CD8-positive, alpha-beta T cell (primary cell): ENCODE measurements at regions of chr3 and their contacts with region 1.

Region 1: GRCh38 chr3:111539351-111540331 is 2.4 kb upstream of the CD96 start:
- DNase-seq: peak; percentile 19 to 84 (median 70)
- ATAC-seq: peak; percentile 34
- H3K4me3 ChIP-seq: peak overlapping the region; percentile 22 to 34
- H3K4me3 Mint-ChIP-seq: peak overlapping the region; percentile 77
- H3K27ac ChIP-seq: peak overlapping the region; percentile 22 to 57
- H3K27ac Mint-ChIP-seq: peak overlapping the region; percentile 93
- H3K4me1 ChIP-seq: peaks cover 41% of the 10 kb centered on the region
- H3K4me1 Mint-ChIP-seq: peaks cover 69% of the 10 kb centered on the region
- H3K27me3 ChIP-seq: no peaks in the 10 kb centered on the region
- H3K27me3 Mint-ChIP-seq: no peaks in the 10 kb centered on the region
- CTCF ChIP-seq: peak; percentile 96

Region 2: DNA sequence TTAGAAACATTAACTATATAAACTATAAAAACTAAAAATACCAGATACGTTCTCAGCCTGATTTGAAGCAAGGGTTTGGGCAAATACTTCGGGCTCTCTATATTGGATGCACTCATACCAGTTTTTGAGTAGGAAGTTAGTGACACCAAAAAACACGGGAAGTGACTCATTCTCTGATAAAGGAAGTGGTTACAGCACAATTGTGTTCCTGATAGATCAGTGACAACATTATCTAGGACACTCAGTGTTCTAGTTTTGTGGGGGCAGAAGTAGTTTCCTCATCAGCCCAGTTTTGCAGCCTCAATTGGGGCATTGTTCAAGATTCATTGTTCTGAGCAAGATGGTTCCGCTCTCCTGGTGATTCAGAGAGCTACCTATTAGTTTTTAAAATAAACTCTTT is 1732.7 kb before region 1 on chr3:
- CTCF ChIA-PET with region 1: interaction called, 3 read pairs
- POLR2A ChIA-PET with region 1: no interaction called
- intact Hi-C with region 1: loop called (anchors 2 to 5 kb)
- DNase-seq: peak in 8 of 9 experiments; percentile 4 to 88 (median 44)
- ATAC-seq: peak; percentile 85
- H3K4me3 ChIP-seq: peak overlapping the region in 1 of 2 experiments; percentile 0
- H3K4me3 Mint-ChIP-seq: peak overlapping the region; percentile 60
- H3K27ac ChIP-seq: peak overlapping the region; percentile 39 to 72
- H3K27ac Mint-ChIP-seq: peak overlapping the region; percentile 91
- H3K4me1 ChIP-seq: peaks cover 43% of the 10 kb centered on the region
- H3K4me1 Mint-ChIP-seq: peaks cover 48% of the 10 kb centered on the region
- H3K27me3 ChIP-seq: no peaks in the 10 kb centered on the region
- H3K27me3 Mint-ChIP-seq: no peaks in the 10 kb centered on the region
- CTCF ChIP-seq: no peak

Region 3: GRCh38 chr3:111210003-111210711 is 329.5 kb before region 1 on chr3:
- CTCF ChIA-PET with region 1: no interaction called
- POLR2A ChIA-PET with region 1: no interaction called
- intact Hi-C with region 1: loop called in 1 of 2 experiments (anchors 5 kb)
- DNase-seq: peak in 2 of 9 experiments; percentile 11 to 28
- ATAC-seq: no peak
- H3K4me3 ChIP-seq: no peak overlapping the region
- H3K4me3 Mint-ChIP-seq: no peak overlapping the region
- H3K27ac ChIP-seq: no peak overlapping the region
- H3K27ac Mint-ChIP-seq: no peak overlapping the region
- H3K4me1 ChIP-seq: no peaks in the 10 kb centered on the region
- H3K4me1 Mint-ChIP-seq: no peaks in the 10 kb centered on the region
- H3K27me3 ChIP-seq: no peaks in the 10 kb centered on the region
- H3K27me3 Mint-ChIP-seq: no peaks in the 10 kb centered on the region
- CTCF ChIP-seq: no peak

Region 4: GRCh38 chr3:111392901-111393351 is 146.7 kb before region 1 on chr3:
- CTCF ChIA-PET with region 1: no interaction called
- POLR2A ChIA-PET with region 1: no interaction called
- intact Hi-C with region 1: loop called (anchors 2 to 5 kb)
- DNase-seq: peak; percentile 3 to 88 (median 33)
- ATAC-seq: peak; percentile 95
- H3K4me3 ChIP-seq: no peak overlapping the region
- H3K4me3 Mint-ChIP-seq: no peak overlapping the region
- H3K27ac ChIP-seq: no peak overlapping the region
- H3K27ac Mint-ChIP-seq: peak overlapping the region; percentile 86
- H3K4me1 ChIP-seq: peaks cover 6% of the 10 kb centered on the region
- H3K4me1 Mint-ChIP-seq: peaks cover 19% of the 10 kb centered on the region
- H3K27me3 ChIP-seq: no peaks in the 10 kb centered on the region
- H3K27me3 Mint-ChIP-seq: no peaks in the 10 kb centered on the region
- CTCF ChIP-seq: no peak

Region 5: GRCh38 chr3:111610189-111610588 is 70.5 kb after region 1 on chr3:
- CTCF ChIA-PET with region 1: interaction called, 3 read pairs
- POLR2A ChIA-PET with region 1: interaction called, 4 read pairs
- intact Hi-C with region 1: loop called in 1 of 2 experiments (anchors 2 kb)
- DNase-seq: peak in 6 of 9 experiments; percentile 16 to 92 (median 46)
- ATAC-seq: peak; percentile 79
- H3K4me3 ChIP-seq: no peak overlapping the region
- H3K4me3 Mint-ChIP-seq: peak overlapping the region; percentile 64
- H3K27ac ChIP-seq: peak overlapping the region; percentile 14 to 77
- H3K27ac Mint-ChIP-seq: peak overlapping the region; percentile 94
- H3K4me1 ChIP-seq: peaks cover 43% of the 10 kb centered on the region
- H3K4me1 Mint-ChIP-seq: peaks cover 70% of the 10 kb centered on the region
- H3K27me3 ChIP-seq: no peaks in the 10 kb centered on the region
- H3K27me3 Mint-ChIP-seq: no peaks in the 10 kb centered on the region
- CTCF ChIP-seq: no peak

Region 6: GRCh38 chr3:111650378-111651275 is 111.0 kb after region 1 on chr3:
- CTCF ChIA-PET with region 1: no interaction called
- POLR2A ChIA-PET with region 1: no interaction called
- intact Hi-C with region 1: no loop called
- DNase-seq: no peak
- ATAC-seq: no peak
- H3K4me3 ChIP-seq: no peak overlapping the region
- H3K4me3 Mint-ChIP-seq: no peak overlapping the region
- H3K27ac ChIP-seq: no peak overlapping the region
- H3K27ac Mint-ChIP-seq: peak overlapping the region; percentile 33
- H3K4me1 ChIP-seq: no peaks in the 10 kb centered on the region
- H3K4me1 Mint-ChIP-seq: peaks cover 2% of the 10 kb centered on the region
- H3K27me3 ChIP-seq: no peaks in the 10 kb centered on the region
- H3K27me3 Mint-ChIP-seq: no peaks in the 10 kb centered on the region
- CTCF ChIP-seq: no peak

Region 7: GRCh38 chr3:111978493-111979433 is 439.1 kb after region 1 on chr3 and contains the start of gene ABHD10:
- CTCF ChIA-PET with region 1: no interaction called
- POLR2A ChIA-PET with region 1: no interaction called
- intact Hi-C with region 1: loop called (anchors 5 kb)
- DNase-seq: peak; percentile 90 to 99 (median 97)
- ATAC-seq: peak; percentile 94
- H3K4me3 ChIP-seq: peak within 1 kb of the TSS; percentile 89
- H3K4me3 Mint-ChIP-seq: peak within 1 kb of the TSS; percentile 94
- H3K27ac ChIP-seq: peak within 1 kb of the TSS; percentile 80 to 85
- H3K27ac Mint-ChIP-seq: peak within 1 kb of the TSS; percentile 95
- H3K4me1 ChIP-seq: peaks cover 31% of the 10 kb centered on the region
- H3K4me1 Mint-ChIP-seq: peaks cover 44% of the 10 kb centered on the region
- H3K27me3 ChIP-seq: no peaks in the 10 kb centered on the region
- H3K27me3 Mint-ChIP-seq: no peaks in the 10 kb centered on the region
- CTCF ChIP-seq: no peak
- total RNA-seq, gene ABHD10: 19.8 to 26.0 TPM